WTC11 (cell line): ENCODE measurements at regions of chr20 and their contacts with region 1.

Region 1: GRCh38 chr20:62977613-62978560 is 25.4 kb downstream of the SLC17A9 start:
- DNase-seq: no peak
- ATAC-seq: no peak
- H3K4me3 Mint-ChIP-seq: no peak overlapping the region
- H3K27ac Mint-ChIP-seq: no peak overlapping the region
- H3K4me1 Mint-ChIP-seq: peaks cover 37% of the 10 kb centered on the region
- H3K27me3 Mint-ChIP-seq: peaks cover 35% of the 10 kb centered on the region
- CTCF ChIP-seq: no peak

Region 2: GRCh38 chr20:63032861-63033634 is 55.2 kb after region 1 on chr20:
- CTCF ChIA-PET with region 1: interaction called, 11 read pairs
- POLR2A ChIA-PET with region 1: no interaction called
- DNase-seq: peak; percentile 52
- ATAC-seq: peak; percentile 13
- H3K4me3 Mint-ChIP-seq: peak overlapping the region; percentile 49
- H3K27ac Mint-ChIP-seq: peak overlapping the region; percentile 91
- H3K4me1 Mint-ChIP-seq: peaks cover 49% of the 10 kb centered on the region
- H3K27me3 Mint-ChIP-seq: peaks cover 6% of the 10 kb centered on the region
- CTCF ChIP-seq: no peak

Region 3: DNA sequence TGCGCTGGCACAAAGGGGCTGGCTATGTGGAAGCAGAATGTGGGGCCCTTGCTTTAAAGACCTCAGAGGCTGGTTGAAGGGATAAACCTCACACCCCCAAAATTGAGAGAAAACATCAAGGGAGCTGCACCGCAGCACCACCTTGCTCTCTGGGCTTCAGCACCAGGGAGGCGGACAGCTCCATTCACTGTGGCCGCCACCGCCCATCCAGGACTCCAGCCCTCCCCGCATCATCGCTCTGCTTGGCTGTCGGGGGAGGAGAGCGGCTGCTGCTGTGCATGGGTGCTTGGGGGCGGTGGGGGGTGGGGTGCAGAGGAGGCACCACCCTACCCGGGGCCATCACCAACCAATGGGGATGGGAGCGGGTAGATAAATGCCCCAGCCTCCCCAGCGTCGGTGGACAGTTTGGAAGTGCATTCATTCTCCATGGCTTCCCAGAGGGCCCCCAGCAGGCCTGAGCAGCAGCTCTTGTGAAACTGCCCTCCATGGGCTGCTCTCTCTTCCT is 104.5 kb after region 1 on chr20:
- CTCF ChIA-PET with region 1: no interaction called
- POLR2A ChIA-PET with region 1: no interaction called
- DNase-seq: peak; percentile 86
- ATAC-seq: peak; percentile 84
- H3K4me3 Mint-ChIP-seq: no peak overlapping the region
- H3K27ac Mint-ChIP-seq: no peak overlapping the region
- H3K4me1 Mint-ChIP-seq: no peaks in the 10 kb centered on the region; the same call in 1 of the 2 replicates
- H3K27me3 Mint-ChIP-seq: peaks cover 11% of the 10 kb centered on the region
- CTCF ChIP-seq: no peak